PC-3 (cell line): ENCODE measurements at regions of chr1 and their contacts with region 1.

Region 1: GRCh38 chr1:52683367-52683940 is 14.7 kb downstream of the COA7 start:
- DNase-seq: no peak
- ATAC-seq: no peak
- H3K4me3 ChIP-seq: no peak overlapping the region
- H3K27ac ChIP-seq: no peak overlapping the region
- H3K4me1 ChIP-seq: no peaks in the 10 kb centered on the region
- H3K27me3 ChIP-seq: no peaks in the 10 kb centered on the region
- CTCF ChIP-seq: no peak

Region 2: GRCh38 chr1:52404116-52404986 is 279.1 kb before region 1 on chr1 and contains the starts of genes ORC1 and PRPF38A:
- CTCF ChIA-PET with region 1: no interaction called
- POLR2A ChIA-PET with region 1: no interaction called
- intact Hi-C with region 1: loop called (anchors 2 kb)
- DNase-seq: peak; percentile 97
- ATAC-seq: peak; percentile 83
- H3K4me3 ChIP-seq: peak within 1 kb of the TSS; percentile 85
- H3K27ac ChIP-seq: peak within 1 kb of the TSS; percentile 76
- H3K4me1 ChIP-seq: peaks cover 35% of the 10 kb centered on the region
- H3K27me3 ChIP-seq: no peaks in the 10 kb centered on the region
- CTCF ChIP-seq: peak; percentile 57
- total RNA-seq, gene ORC1: 23.7 and 28.9 TPM in 2 replicates
- total RNA-seq, gene PRPF38A: 14.5 and 15.2 TPM in 2 replicates

Region 3: DNA sequence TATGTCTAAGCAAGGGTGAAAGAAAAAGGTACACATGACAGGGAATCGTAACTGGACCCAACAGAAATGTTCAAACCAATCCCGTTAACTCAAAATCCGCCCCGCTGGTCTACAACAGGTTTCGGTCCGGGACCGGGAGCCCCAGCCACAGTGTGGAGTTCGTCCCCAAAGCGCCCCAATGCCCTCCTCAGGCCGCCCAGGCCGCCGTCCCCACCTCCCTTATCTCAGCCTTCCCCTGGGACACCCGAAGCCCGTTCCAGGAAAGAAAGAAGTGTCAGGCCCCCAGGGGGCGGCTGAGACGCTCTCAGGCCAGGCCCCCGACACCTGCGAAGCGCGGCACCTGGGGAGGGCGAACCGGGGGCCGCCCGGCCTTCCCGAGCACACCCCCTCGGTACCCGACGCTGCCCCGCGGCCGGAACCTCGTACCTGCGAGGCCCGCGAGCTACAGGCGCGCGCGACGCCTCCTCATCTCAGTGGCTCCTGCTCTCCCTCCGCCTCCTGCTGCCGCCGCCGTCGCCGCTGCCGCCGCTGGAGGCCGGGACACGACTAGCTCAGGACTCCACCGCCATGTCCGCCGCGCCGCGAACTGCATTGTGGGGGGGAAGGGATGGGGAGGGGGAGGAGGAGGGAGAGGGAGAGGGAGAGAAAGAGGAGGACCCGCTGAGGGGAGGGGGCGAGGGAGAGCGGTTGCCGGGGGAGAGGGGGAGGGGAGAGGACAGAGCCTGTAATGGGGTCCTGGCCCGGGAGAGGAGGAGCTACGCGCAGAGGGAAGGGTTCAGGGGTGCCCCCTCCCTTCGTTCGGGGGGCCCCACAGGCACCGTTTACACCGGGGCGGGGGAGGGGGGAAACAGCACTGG is 130.7 kb before region 1 on chr1 and contains the start of gene TUT4:
- CTCF ChIA-PET with region 1: no interaction called
- POLR2A ChIA-PET with region 1: no interaction called
- intact Hi-C with region 1: loop called (anchors 5 kb)
- DNase-seq: peak; percentile 66
- ATAC-seq: peak; percentile 58
- H3K4me3 ChIP-seq: peak within 1 kb of the TSS; percentile 82
- H3K27ac ChIP-seq: peak within 1 kb of the TSS; percentile 48
- H3K4me1 ChIP-seq: peaks cover 11% of the 10 kb centered on the region
- H3K27me3 ChIP-seq: no peaks in the 10 kb centered on the region
- CTCF ChIP-seq: peak; percentile 12; the same call in 1 of the 2 replicates
- total RNA-seq, gene TUT4: 36.1 and 37.4 TPM in 2 replicates

Region 4: DNA sequence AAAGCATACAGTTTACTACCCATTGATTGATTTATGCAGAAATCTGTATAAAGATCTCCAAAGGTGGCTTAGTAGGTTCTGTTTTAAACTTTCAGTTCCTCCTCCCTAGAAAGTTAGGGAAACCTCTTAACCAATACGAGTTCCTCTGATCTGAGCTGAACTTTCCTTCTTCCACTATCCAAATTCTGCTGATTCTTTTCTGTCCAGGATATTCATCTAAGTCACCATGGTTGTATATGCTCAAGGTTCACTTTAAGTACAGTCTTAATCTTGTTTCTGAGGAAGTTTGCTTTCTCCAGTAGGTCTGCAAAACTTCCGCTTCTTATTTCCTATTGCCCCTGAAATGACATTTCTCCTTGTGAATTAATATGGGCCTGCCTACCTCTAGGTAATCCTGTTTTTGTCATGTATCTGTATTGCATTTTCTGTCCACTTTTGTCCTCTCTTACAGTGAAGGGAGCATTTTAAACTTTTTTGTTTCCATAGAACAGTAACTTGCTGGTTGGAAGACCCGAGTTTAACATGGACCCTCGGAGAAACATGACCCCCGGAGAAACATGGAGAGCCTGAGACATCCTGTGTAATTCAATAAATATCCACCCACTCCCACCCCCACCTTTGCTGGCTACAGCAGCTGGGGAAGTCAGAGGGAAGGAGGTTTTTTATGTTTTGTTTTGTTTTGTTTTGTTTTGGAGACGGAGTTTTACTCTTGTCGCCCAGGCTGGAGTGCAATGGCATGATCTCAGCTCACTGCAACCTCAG is 113.8 kb before region 1 on chr1:
- CTCF ChIA-PET with region 1: no interaction called
- POLR2A ChIA-PET with region 1: no interaction called
- intact Hi-C with region 1: loop called (anchors 5 kb)
- DNase-seq: no peak
- ATAC-seq: no peak
- H3K4me3 ChIP-seq: no peak overlapping the region
- H3K27ac ChIP-seq: no peak overlapping the region
- H3K4me1 ChIP-seq: peaks cover 6% of the 10 kb centered on the region; the same call in 1 of the 2 replicates
- H3K27me3 ChIP-seq: no peaks in the 10 kb centered on the region
- CTCF ChIP-seq: no peak